Naive thymus-derived CD8-positive, alpha-beta T cell (primary cell): ENCODE measurements at regions of chr14 and their contacts with region 1.

Region 1: DNA sequence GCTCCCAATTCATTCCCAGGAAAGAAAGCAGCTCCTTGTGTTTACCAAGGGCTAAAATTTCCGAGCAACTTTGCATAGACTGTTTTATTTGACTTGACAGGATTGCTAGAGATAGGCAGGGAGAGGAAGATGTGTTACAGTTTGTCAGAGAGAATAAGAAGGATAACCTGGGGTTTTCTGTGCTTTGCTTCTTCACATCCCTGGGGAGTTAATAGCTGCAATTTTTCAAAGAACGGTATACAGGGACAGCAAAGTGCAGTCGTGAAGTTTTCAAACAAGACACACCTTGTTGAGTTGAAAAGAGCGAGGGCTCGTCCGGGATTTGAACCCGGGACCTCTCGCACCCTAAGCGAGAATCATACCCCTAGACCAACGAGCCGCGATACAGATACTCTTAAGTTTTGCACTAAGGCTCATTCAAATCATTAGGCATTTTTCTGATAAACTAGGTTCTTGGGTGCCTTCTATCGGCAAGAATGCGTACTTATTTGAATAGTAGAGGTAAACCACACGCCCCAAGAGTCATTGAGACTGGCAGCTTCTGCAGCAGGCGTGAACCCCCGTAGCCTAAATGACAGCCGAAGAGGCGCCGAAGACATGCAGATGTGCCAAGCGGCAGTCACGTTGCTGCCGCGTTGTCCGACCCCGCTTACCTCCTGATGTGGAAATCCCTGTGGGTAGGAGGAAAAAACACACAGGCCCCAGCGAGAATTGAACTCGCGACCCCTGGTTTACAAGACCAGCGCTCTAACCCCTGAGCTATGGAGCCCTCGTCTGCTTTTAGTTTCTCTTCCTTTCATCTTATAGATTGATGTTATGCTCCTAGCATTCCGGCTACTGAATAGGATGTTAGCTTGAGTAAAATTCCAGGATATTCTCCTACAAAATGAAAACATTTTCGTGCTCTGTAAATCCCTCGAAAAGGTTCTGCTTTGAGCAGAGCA is 22.2 kb upstream of the RNASE12 start:
- DNase-seq: peak; percentile 56 to 93 (median 85)
- ATAC-seq: peak; percentile 77 to 81
- H3K4me3 Mint-ChIP-seq: no peak overlapping the region
- H3K27ac Mint-ChIP-seq: no peak overlapping the region
- H3K4me1 Mint-ChIP-seq: peaks cover 0 to 13% (median 2%) of the 10 kb centered on the region in 4 donors
- H3K27me3 Mint-ChIP-seq: no peaks in the 10 kb centered on the region

Region 2: GRCh38 chr14:20413045-20413799 is 200.1 kb before region 1 on chr14 and contains the start of gene TEP1:
- POLR2A ChIA-PET with region 1: interaction called, 13 read pairs
- DNase-seq: peak; percentile 45 to 79 (median 64)
- ATAC-seq: peak; percentile 69 to 84
- H3K4me3 Mint-ChIP-seq: peak within 1 kb of the TSS; percentile 90 to 100 (median 96)
- H3K27ac Mint-ChIP-seq: peak within 1 kb of the TSS; percentile 84 to 99 (median 96)
- H3K4me1 Mint-ChIP-seq: peaks cover 22 to 63% (median 47%) of the 10 kb centered on the region in 4 donors
- H3K27me3 Mint-ChIP-seq: no peaks in the 10 kb centered on the region
- polyA plus RNA-seq, gene TEP1: 3.0 to 4.9 (median 4.5) TPM

Region 3: DNA sequence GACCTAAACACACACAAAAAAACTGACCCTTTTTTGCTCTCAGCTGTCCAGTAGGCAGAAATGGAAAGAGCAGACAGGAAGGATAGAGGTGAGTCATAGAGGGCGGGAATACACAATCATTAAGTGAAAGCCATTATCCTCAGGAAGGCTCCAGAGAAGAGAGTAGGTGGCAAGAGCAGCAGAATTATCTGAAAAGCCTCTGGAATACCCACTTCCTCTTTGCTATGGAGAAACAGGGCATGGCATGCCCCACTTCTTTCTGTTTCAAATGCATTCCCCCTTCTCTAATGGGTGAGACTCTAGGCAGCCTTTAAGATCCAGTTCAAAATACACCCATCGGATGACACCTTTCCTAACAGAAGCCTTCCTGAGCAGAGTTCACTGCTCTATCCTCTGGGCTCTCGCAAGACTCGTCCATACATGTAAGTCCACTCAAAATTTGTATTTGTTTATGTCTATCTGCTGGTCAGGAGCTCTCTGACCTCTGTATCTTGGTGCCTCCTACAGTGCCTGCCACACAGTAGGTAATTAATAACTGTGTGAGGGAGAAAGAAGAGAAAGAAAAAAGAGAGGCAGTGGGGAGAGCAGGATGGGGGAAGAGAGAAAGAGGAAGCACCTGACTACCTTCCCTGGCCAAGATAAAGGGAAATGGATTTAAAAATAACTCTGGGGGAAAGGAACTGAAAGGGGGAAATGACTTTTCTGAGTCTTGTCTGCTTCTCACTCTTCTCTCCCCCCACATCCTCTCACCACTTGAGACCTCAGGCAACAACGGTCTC is 185.9 kb before region 1 on chr14:
- POLR2A ChIA-PET with region 1: no interaction called
- DNase-seq: peak in 2 of 10 donors; percentile 21 to 32
- ATAC-seq: peak; percentile 38 to 62
- H3K4me3 Mint-ChIP-seq: peak overlapping the region; percentile 45 to 80 (median 79)
- H3K27ac Mint-ChIP-seq: peak overlapping the region; percentile 88 to 95 (median 93)
- H3K4me1 Mint-ChIP-seq: peaks cover 24 to 50% (median 46%) of the 10 kb centered on the region in 4 donors
- H3K27me3 Mint-ChIP-seq: no peaks in the 10 kb centered on the region

Region 4: GRCh38 chr14:20632682-20633428 is 19.5 kb after region 1 on chr14:
- POLR2A ChIA-PET with region 1: interaction called, 20 read pairs
- DNase-seq: peak in 8 of 10 donors; percentile 44 to 80 (median 62)
- ATAC-seq: peak; percentile 60 to 70
- H3K4me3 Mint-ChIP-seq: peak overlapping the region; percentile 79 to 93 (median 87)
- H3K27ac Mint-ChIP-seq: peak overlapping the region; percentile 25 to 98 (median 77)
- H3K4me1 Mint-ChIP-seq: peaks cover 27 to 55% (median 51%) of the 10 kb centered on the region in 4 donors
- H3K27me3 Mint-ChIP-seq: peaks cover 0 to 48% (median 3%) of the 10 kb centered on the region in 5 donors

Region 5: DNA sequence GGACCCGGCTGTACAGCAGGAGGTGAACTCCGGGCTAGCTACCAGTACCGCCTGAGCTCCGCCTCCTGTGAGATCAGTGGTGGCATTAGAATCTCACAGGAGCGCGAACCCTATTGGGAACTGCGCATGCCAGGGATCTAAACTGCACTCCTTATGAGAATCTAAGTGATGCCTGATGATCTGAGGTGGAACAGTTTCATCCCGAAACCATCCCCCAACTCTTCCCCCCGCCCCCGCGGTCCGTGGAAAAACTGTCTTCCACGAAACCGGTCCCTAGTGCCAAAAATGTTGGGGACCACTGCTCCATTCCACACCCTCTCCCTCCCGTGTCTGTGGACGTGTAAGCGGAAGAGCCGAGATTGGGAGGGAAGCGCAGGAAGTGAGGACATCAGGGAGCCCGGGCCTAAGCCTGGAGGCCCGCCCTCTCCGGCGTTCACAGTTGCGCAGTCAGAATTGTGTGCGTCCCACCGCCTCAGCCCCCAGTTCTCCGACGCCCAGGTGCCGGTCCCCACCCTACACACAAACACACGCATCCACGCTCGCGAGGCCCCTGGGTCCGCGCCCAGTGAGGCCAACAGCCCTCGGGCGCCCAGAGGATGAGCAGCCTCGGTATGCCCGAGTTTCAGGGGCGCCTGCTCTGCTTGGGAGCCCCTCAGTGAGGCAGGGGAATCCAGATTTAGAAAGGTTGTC is 69.2 kb after region 1 on chr14:
- POLR2A ChIA-PET with region 1: interaction called, 65 read pairs
- DNase-seq: peak; percentile 71 to 91 (median 80)
- ATAC-seq: peak; percentile 61 to 70
- H3K4me3 Mint-ChIP-seq: no peak overlapping the region
- H3K27ac Mint-ChIP-seq: no peak overlapping the region
- H3K4me1 Mint-ChIP-seq: peaks cover 8 to 33% (median 15%) of the 10 kb centered on the region in 4 donors
- H3K27me3 Mint-ChIP-seq: peaks cover 0 to 5% (median 0%) of the 10 kb centered on the region in 5 donors